CD14-positive monocyte (primary cell): ENCODE measurements at regions of chr21 and their contacts with region 1.

Region 1: DNA sequence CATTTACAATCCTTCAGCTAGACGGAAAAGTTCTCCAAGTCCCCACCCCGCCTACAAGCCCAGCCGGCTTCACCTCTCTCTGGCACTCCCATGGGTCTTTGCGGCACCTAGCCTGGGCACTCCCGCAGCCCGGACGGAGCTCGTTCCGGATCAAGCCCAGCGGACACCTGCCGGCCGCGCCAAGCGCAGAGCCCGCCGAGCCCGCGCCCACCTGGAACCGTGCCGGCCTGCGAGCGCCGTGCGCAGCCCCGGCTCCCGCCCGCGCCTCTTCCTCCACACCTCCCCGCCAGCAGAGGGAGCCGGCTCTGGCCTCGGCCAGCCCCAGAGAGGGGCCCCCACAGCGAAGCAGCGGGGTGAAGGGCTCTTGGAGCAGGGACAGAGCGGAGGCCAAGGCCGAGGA is 50.0 kb upstream of the KRTAP19-8 start:
- DNase-seq: no peak
- H3K4me3 ChIP-seq: no peak overlapping the region
- H3K4me3 Mint-ChIP-seq: no peak overlapping the region
- H3K27ac ChIP-seq: no peak overlapping the region
- H3K27ac Mint-ChIP-seq: no peak overlapping the region
- H3K4me1 ChIP-seq: peaks cover 0 to 2% of the 10 kb centered on the region in 2 donors
- H3K4me1 Mint-ChIP-seq: peaks cover 7% of the 10 kb centered on the region
- H3K27me3 ChIP-seq: no peaks in the 10 kb centered on the region
- H3K27me3 Mint-ChIP-seq: peaks cover 6 to 29% (median 13%) of the 10 kb centered on the region in 3 donors
- CTCF ChIP-seq: no peak

Region 2: DNA sequence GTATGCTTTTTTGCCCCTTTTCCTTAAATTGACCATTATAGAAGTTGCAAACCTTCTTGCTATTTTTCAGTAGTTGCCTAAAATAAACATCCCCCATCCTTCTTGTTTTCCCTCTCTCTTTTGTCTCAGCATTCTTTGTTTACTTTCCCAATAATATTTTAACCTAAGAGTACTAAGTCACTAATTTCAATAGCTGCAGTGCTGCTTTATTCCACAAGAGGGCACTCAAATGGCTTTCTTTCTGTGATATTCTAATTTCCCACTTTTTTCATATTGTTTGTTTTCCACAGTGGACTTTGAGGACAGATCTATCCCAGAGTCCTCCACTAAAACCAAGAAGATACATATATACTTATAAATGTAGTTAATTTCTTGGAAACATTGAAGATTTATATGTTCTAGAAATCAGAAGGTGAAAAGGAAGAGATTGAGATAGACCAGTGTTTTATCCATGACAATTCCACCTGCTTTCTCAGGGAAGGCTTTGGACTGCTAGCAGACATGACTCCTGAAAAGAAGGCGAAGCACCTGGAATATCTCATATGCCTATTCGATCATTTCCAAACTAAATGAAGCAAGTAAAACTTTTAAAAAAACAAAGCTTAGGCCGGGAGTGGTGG is 1043.8 kb before region 1 on chr21:
- intact Hi-C with region 1: loop called in 1 of 2 experiments (anchors 10 kb)
- DNase-seq: peak in 1 of 3 donors; percentile 5
- H3K4me3 ChIP-seq: no peak overlapping the region
- H3K4me3 Mint-ChIP-seq: no peak overlapping the region
- H3K27ac ChIP-seq: no peak overlapping the region
- H3K27ac Mint-ChIP-seq: no peak overlapping the region
- H3K4me1 ChIP-seq: no peaks in the 10 kb centered on the region
- H3K4me1 Mint-ChIP-seq: no peaks in the 10 kb centered on the region
- H3K27me3 ChIP-seq: no peaks in the 10 kb centered on the region
- H3K27me3 Mint-ChIP-seq: no peaks in the 10 kb centered on the region
- CTCF ChIP-seq: peak; percentile 86

Region 3: DNA sequence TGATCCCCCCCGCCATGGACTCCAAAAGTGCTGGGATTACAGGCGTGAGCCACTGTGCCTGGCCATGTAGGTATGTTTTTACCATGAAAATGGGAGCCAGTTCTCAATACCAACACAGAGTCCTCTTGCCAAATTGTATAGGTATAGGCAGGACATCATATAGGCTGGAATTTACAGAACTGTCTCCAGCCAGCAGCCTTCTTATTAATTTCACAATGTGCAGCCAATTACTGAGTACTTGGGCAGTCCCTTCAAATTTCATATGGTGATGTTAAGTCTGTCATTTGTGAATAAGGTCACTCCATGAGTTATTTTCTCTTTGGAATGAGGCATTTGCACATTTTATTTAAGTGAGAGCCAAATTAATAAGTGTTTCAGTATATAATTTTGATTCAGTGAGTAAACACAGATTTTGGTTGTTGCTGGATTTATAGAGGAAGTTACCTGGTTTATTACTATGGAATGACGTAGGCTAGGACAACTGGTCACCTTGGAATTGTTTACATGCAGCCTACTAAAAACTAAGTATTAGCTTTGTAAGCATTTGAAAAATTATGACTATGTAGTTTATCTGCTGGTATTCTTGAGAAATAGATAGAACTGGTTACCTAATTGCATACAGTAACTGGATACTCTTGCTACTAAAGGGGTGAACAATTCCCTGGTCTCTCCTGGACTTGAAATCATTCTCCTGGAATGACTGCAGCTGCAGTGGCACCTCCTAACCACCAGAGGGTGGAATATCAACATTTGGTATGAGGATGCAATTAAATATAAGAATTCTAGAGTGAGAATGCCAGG is 747.7 kb before region 1 on chr21:
- intact Hi-C with region 1: loop called (anchors 5 to 10 kb)
- DNase-seq: peak in 1 of 3 donors; percentile 2
- H3K4me3 ChIP-seq: no peak overlapping the region
- H3K4me3 Mint-ChIP-seq: no peak overlapping the region
- H3K27ac ChIP-seq: no peak overlapping the region
- H3K27ac Mint-ChIP-seq: no peak overlapping the region
- H3K4me1 ChIP-seq: no peaks in the 10 kb centered on the region
- H3K4me1 Mint-ChIP-seq: no peaks in the 10 kb centered on the region
- H3K27me3 ChIP-seq: no peaks in the 10 kb centered on the region
- H3K27me3 Mint-ChIP-seq: peaks cover 0 to 4% (median 0%) of the 10 kb centered on the region in 3 donors
- CTCF ChIP-seq: peak; percentile 77

Region 4: DNA sequence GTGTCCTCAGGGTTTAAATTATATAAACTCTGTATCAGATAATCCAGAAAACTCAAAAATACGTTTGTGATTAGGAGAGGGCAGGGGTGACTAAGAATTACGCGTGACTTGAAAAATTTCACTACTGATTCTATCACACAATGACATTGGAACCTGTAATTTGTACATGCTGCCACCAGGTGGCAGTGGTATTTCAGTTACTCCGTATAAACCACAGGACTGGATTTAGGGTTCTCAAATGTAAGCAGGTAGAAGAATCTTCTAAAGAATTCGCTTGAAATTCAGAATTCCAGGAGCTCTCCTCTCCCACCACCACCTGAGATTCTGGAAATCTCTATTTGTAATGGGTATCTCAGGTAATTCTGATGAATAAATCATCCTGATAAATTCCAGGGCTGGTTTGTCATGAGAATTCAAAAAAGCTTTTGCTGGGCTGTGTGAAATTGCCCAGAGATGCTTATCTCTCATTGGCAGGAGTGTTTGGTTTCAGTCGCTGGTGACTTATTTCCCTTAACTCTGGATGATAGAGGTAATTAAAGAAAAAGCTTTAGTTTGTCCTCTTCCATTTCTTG is 257.0 kb before region 1 on chr21:
- intact Hi-C with region 1: loop called (anchors 5 kb)
- DNase-seq: peak; percentile 2 to 25 (median 17)
- H3K4me3 ChIP-seq: no peak overlapping the region
- H3K4me3 Mint-ChIP-seq: no peak overlapping the region
- H3K27ac ChIP-seq: no peak overlapping the region
- H3K27ac Mint-ChIP-seq: no peak overlapping the region
- H3K4me1 ChIP-seq: no peaks in the 10 kb centered on the region
- H3K4me1 Mint-ChIP-seq: no peaks in the 10 kb centered on the region
- H3K27me3 ChIP-seq: no peaks in the 10 kb centered on the region
- H3K27me3 Mint-ChIP-seq: no peaks in the 10 kb centered on the region
- CTCF ChIP-seq: peak; percentile 76

Region 5: DNA sequence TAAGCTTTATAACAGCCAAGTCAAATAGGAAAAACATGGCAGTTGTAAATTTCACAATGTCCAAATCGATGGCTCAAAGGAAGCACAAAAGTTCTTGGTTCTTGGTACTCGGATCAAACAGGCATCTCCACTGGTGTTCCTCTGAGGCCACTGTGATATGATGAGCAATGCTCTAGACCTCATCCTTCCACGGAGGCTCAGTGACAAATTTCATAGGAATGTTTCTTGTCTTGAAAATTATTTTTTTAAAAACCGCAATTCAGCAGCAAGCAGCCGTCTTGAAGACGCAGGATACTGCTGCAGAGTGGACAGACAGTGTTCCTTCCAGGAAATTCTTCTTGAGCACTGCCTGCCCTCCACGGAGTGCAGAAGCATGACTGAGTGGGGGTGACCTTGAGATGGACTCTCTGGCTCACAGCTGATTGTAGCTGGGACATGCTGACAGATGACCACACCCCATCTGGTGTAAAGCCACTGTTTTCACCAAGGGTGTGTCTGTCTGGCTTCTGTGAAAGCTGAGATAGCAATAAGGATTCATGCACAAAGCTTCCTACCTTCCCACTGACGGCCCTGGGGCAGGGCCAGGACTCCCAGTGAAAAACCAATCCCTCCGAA is 193.9 kb after region 1 on chr21:
- intact Hi-C with region 1: no loop called
- DNase-seq: no peak
- H3K4me3 ChIP-seq: no peak overlapping the region
- H3K4me3 Mint-ChIP-seq: no peak overlapping the region
- H3K27ac ChIP-seq: no peak overlapping the region
- H3K27ac Mint-ChIP-seq: peak overlapping the region in 1 of 7 donors; percentile 70
- H3K4me1 ChIP-seq: peaks cover 6 to 7% of the 10 kb centered on the region in 2 donors
- H3K4me1 Mint-ChIP-seq: peaks cover 10% of the 10 kb centered on the region
- H3K27me3 ChIP-seq: no peaks in the 10 kb centered on the region
- H3K27me3 Mint-ChIP-seq: peaks cover 0 to 5% (median 0%) of the 10 kb centered on the region in 3 donors
- CTCF ChIP-seq: no peak